ENCODE measurements at regions of chr11 and their contacts with region 1.

Region 1: GRCh38 chr11:67630228-67630942 is 648 bp upstream of the NUDT8 start:
- DNase-seq: peak; percentile 98
- ATAC-seq: peak; percentile 62
- H3K4me3 Mint-ChIP-seq: peak overlapping the region; percentile 93
- H3K27ac Mint-ChIP-seq: peak overlapping the region; percentile 91
- H3K4me1 Mint-ChIP-seq: peaks cover 13% of the 10 kb centered on the region
- H3K27me3 Mint-ChIP-seq: peaks cover 2% of the 10 kb centered on the region

Region 2: GRCh38 chr11:67420646-67421420 is 209.6 kb before region 1 on chr11:
- POLR2A ChIA-PET with region 1: no interaction called
- DNase-seq: peak; percentile 100
- ATAC-seq: peak; percentile 75
- H3K4me3 Mint-ChIP-seq: peak overlapping the region; percentile 84
- H3K27ac Mint-ChIP-seq: peak overlapping the region; percentile 90
- H3K4me1 Mint-ChIP-seq: peaks cover 43% of the 10 kb centered on the region
- H3K27me3 Mint-ChIP-seq: no peaks in the 10 kb centered on the region

Region 3: DNA sequence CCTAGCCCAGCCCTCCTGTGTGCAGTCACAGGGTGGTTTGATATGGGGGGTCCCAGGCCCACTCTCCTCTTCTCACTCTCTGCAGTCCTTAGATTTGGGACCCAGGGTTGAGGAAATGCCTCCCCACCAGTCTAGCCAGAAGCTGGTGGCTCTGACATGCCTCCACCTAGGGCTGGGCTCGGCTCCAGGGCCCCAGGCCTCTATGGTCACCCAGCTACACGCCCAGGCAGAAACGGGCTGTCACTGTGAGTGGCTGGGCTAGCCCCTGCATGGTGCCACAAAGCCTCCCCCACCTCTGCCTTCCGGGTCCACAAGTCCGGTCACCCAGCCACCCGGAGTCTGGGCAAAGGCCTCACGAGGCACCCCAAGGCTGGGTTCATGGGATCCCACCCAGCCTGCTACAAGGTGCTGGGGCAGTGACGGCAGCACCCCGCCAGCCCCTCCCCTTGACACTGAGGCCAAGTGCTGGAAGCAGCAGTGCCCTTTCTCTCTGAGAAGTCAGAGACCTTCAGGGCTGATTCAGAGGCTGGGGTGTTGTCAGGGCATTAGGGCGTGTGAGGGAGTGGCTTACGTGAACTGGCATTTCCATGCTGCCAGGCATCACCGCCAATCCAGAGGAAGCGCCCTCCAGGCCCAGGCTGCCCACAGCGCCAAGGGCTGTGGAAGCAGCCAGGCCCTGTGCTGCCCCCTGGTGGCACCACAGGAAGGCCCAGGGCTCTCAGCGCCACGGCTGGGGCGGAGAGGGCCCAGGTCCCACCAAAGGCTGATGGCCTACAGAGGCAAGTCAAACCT is 124.6 kb before region 1 on chr11:
- POLR2A ChIA-PET with region 1: no interaction called
- DNase-seq: peak; percentile 94
- ATAC-seq: peak; percentile 40
- H3K4me3 Mint-ChIP-seq: peak overlapping the region; percentile 93
- H3K27ac Mint-ChIP-seq: peak overlapping the region; percentile 94
- H3K4me1 Mint-ChIP-seq: peaks cover 37% of the 10 kb centered on the region
- H3K27me3 Mint-ChIP-seq: peaks cover 5% of the 10 kb centered on the region

Region 4: GRCh38 chr11:67584205-67584880 is 46.0 kb before region 1 on chr11:
- POLR2A ChIA-PET with region 1: no interaction called
- DNase-seq: peak; percentile 58
- ATAC-seq: peak; percentile 30
- H3K4me3 Mint-ChIP-seq: peak overlapping the region; percentile 69
- H3K27ac Mint-ChIP-seq: peak overlapping the region; percentile 72
- H3K4me1 Mint-ChIP-seq: peaks cover 36% of the 10 kb centered on the region
- H3K27me3 Mint-ChIP-seq: peaks cover 29% of the 10 kb centered on the region

Region 5: GRCh38 chr11:67599149-67599548 is 31.2 kb before region 1 on chr11:
- POLR2A ChIA-PET with region 1: no interaction called
- DNase-seq: no peak
- ATAC-seq: no peak
- H3K4me3 Mint-ChIP-seq: no peak overlapping the region
- H3K27ac Mint-ChIP-seq: no peak overlapping the region
- H3K4me1 Mint-ChIP-seq: peaks cover 20% of the 10 kb centered on the region
- H3K27me3 Mint-ChIP-seq: peaks cover 32% of the 10 kb centered on the region

Region 6: DNA sequence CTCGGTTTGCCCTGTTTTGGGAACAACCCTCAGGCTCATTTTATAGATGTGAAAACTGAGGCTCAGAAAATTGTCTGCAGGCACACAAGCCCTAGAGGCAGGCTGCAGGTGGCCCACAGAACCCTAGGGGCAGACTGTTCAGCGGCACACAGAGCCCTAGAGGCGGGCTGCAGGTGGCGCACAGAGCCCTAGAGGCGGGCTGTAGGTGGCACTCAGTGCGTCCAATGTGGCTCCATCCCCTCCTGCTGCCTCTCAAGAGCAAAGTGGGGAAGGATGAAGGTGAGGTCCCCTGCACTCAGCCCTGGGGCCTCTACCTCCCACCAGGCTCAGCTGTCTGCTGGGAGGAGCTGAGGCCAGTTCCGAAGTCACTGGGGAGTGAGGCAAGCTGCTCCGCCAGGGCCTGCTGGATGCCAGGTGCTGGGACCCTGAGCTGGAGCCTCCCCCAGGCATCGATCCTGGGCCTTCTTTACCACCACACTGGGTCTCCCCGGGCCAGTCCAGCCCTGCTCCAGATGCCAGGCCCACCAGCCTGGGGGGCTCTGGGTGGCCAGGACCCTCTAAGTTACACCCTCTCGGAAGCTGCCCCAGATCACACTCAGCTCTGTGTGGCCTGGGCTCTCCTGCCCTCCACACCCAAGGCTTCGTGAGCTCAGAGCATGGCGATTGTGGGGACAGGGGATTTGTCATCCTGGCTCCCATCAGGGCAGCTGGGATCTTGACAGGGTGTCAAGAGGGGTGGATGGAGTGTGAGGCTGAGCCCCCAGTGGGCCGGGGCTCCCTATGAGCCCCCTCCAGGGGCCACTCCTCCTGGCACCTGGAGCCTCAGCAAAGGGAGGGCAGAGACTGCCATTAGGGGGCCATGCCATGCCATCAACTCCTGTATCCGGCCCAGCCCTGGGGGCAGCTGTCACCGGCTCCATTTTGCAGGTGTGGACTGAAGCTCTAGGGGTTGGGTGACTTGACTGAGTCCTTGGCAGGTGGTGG is 18.0 kb after region 1 on chr11:
- POLR2A ChIA-PET with region 1: interaction called, 44 read pairs
- DNase-seq: peak; percentile 61
- ATAC-seq: peak; percentile 75
- H3K4me3 Mint-ChIP-seq: peak overlapping the region; percentile 79
- H3K27ac Mint-ChIP-seq: peak overlapping the region; percentile 85
- H3K4me1 Mint-ChIP-seq: peaks cover 47% of the 10 kb centered on the region
- H3K27me3 Mint-ChIP-seq: peaks cover 12% of the 10 kb centered on the region